ENCODE measurements at regions of chr18 and their contacts with region 1.

Region 1: GRCh38 chr18:43271593-43272432 is 5.5 kb downstream of the SYT4 start:
- DNase-seq: peak in 4 of 14 experiments; percentile 3 to 36 (median 32)
- ATAC-seq: no peak
- H3K4me3 ChIP-seq: no peak overlapping the region
- H3K4me3 Mint-ChIP-seq: no peak overlapping the region
- H3K27ac ChIP-seq: no peak overlapping the region
- H3K27ac Mint-ChIP-seq: no peak overlapping the region
- H3K4me1 ChIP-seq: no peaks in the 10 kb centered on the region
- H3K4me1 Mint-ChIP-seq: no peaks in the 10 kb centered on the region
- H3K27me3 ChIP-seq: no peaks in the 10 kb centered on the region
- H3K27me3 Mint-ChIP-seq: no peaks in the 10 kb centered on the region
- CTCF ChIP-seq: peak; percentile 72

Region 2: DNA sequence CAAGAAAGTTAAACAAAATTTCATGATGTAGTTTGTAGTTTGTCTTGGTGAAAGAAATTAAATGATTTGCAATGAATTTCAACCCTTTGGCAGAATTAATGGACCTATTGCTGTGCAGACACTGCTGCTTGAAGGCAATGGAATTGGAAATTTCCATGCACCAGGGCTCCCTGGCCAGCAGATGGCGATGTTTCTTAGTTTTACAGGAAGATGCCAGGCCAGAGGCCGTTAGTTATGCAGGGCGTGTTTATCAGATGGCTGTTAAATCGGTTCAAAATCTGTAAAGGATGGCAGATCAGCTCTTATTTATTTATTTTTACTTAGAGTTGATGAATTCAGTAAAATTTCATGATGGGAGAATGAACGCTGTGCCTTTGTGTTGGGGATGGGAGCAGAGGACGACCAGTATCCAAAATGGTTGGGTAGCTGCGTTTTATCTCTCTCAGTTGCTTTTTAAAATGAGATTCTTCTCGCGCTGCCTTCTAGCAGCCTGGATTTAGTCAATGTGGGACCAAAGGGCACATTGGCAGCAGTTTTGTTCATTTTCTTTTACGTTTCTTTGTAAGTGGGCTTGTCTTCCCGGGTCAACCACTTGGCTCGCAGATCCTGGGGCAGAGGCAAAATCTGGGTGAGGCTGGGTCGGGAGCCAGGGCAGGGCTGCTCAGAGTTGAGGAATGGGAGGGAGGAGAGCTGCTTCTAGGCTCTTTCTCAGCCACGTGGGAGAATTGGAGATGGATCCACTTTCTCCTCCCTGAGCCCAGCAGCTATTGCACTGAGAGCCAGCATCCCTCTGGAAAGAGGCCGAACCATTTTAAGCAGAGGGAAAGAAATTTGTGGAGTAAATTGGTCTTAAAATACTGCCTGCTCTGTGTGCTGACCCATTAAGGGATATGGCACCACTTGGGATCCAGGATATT is 972.8 kb before region 1 on chr18:
- CTCF ChIA-PET with region 1: no interaction called
- POLR2A ChIA-PET with region 1: no interaction called
- intact Hi-C with region 1: loop called in 1 of 2 experiments (anchors 10 kb)
- DNase-seq: peak; percentile 1 to 60 (median 22)
- ATAC-seq: no peak
- H3K4me3 ChIP-seq: no peak overlapping the region
- H3K4me3 Mint-ChIP-seq: no peak overlapping the region
- H3K27ac ChIP-seq: no peak overlapping the region
- H3K27ac Mint-ChIP-seq: no peak overlapping the region
- H3K4me1 ChIP-seq: no peaks in the 10 kb centered on the region
- H3K4me1 Mint-ChIP-seq: no peaks in the 10 kb centered on the region
- H3K27me3 ChIP-seq: no peaks in the 10 kb centered on the region
- H3K27me3 Mint-ChIP-seq: peaks cover 5% of the 10 kb centered on the region
- CTCF ChIP-seq: peak; percentile 82